ENCODE measurements at regions of chr5 and their contacts with region 1.

Region 1: DNA sequence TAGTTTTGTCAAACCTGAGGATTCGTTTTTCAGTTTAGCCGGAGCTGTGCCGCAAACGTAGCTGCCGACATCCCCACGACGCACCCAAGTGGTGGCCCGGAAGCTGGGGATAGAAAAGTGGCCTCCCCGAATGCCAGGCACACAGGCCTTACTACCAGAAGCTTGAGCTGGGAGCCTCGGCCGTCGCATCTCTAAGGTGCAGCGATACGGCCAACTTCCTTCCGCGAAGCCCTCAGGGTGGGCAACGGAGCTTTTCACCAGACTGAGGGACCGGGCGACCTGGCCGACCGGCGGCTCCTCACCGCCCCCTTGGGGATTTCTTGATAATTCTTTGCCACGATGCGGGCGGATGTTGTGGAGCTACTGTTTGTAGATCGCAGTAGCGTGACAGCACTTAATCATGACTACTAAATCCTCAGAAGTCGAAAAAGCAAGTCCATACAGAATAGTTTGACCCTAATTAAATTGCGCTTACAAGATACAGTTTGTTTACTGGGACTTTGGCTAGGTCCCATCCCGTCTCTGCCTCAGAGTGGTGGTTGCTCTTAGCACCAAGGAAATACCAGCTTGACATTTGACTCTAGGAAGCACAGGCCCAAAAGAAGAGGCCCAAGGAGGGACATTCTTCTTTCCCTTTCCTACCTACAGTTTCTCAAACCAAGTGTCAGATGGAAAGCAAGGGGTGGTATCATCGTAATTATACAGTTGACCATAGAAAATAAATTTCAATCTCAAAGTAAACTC is 613 bp upstream of the TMEM267 start:
- DNase-seq: peak; percentile 82 to 93 (median 86)
- H3K4me3 ChIP-seq: peak overlapping the region in 3 of 4 donors; percentile 5 to 90 (median 70)
- H3K27ac ChIP-seq: peak overlapping the region; percentile 92 to 100 (median 96)
- H3K4me1 ChIP-seq: peaks cover 0 to 21% of the 10 kb centered on the region in 2 donors
- H3K27me3 ChIP-seq: no peaks in the 10 kb centered on the region
- CTCF ChIP-seq: peak; percentile 70 to 86 (median 74)
- POLR2A ChIP-seq: peak in 1 of 2 donors; percentile 4

Region 2: DNA sequence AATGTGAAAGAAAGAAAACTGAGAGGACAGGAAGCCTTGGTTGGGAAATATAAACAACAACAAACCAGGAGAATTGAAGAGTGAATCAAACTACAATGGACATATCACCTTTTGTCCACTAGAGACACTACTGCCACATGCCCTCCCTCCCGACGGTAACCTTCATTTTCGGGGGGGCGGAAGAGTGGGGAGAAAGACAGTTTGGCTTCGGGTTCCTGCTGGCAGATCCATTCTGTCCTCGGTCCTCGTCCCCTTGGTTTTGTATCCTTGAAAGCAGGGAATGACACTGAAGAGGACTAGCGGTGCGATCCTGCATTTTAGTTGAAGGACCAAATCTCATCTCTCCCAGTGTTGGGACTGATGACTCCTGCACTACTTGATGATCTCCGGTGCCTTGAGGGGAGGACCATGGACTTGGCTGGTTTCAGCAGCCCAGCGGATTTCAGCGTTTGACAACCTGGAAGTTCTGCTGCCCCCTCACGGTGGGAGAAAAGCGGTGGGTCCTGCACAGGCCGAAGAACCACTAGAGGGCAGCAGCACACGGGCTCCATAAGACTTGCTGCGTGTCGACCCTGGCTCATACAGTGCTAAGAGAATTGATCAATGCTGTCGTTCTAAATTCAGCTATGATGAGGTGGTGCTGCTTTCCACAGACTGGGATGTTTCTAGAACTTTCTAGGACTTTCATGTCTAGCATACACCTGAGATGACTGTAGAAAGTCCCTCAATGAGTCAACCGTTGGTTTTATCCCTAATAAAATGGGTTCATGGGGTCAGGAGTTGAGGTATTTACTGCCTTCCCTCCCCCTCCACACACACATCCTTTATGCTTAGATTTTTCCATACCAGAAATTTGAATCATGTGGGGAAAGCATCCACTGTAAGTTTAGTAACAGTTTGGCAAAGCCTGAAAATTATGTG is 378.6 kb before region 1 on chr5:
- intact Hi-C with region 1: loop called in 1 of 2 experiments (anchors 5 kb)
- DNase-seq: peak; percentile 88 to 96 (median 94)
- H3K4me3 ChIP-seq: peak overlapping the region in 3 of 4 donors; percentile 10 to 44 (median 16)
- H3K27ac ChIP-seq: peak overlapping the region in 4 of 5 donors; percentile 36 to 82 (median 63)
- H3K4me1 ChIP-seq: peaks cover 0 to 7% of the 10 kb centered on the region in 2 donors
- H3K27me3 ChIP-seq: no peaks in the 10 kb centered on the region
- CTCF ChIP-seq: peak; percentile 99 to 100 (median 100)
- POLR2A ChIP-seq: no peak

Region 3: DNA sequence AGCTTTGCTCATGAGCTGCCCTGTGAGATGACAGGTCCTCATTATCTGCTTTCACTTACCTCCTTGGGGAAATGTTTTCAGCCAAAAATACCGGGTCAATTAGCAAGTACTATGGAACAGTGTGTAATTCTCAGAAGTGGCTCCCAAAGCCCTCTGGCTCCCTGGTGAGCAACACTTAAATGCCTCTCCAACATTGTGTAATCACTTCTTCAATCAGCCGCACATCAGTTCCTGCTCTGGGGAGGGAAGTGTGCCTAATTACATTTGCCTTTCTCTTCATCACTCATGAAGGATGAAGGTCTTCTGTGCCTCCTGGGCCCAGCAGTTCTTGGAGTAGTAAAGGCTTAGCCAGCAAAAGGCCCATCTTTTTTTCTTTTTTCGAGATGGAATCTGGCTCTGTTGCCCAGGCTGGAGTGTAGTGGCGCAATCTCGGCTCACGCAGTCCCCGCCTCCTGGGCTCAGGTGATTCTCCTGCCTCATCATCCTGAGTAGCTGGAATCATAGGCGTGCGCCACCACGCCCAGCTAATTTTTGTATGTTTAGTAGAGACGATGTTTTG is 269.1 kb before region 1 on chr5:
- intact Hi-C with region 1: no loop called
- DNase-seq: no peak
- H3K4me3 ChIP-seq: no peak overlapping the region
- H3K27ac ChIP-seq: no peak overlapping the region
- H3K4me1 ChIP-seq: no peaks in the 10 kb centered on the region
- H3K27me3 ChIP-seq: no peaks in the 10 kb centered on the region
- CTCF ChIP-seq: no peak
- POLR2A ChIP-seq: no peak

Region 4: DNA sequence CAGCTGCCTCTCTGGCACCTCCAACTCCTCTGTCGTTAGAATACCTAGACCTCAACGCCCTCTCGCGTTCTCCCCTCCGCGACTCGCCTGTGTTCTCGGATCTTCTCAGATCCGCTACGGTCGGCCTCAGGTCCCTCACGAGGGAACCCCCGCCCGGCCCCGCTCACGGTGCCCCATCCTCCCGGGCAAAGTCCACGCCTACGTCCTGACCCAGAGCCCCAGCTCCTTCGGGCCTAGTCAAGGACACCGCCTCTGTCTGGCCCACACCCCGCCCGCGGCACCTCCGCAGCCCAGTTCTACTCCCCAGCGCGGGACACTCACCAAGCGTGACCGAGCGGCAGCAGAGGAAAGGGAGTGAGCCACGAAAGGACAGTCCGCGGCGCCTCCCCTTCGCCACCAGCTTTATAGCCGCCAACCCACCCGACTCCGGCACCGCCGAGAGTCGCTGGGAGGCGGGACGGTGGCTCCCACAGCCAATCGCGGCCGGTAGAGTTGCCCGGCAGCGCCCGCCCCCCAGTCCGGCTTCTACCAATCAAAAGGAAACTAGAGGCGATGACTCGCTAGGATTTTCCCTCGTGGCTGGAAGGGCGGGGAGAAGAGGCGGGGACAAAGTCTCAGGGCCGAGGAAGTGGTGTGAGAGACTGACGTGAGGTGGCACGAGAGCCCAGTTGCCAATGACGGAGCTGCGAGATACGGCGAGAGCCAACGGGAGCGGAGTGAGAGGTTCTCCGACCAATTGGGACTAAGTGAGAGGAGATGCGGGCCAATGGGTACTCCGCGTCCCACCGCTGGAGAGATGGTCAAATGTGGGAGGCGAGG is 171.0 kb before region 1 on chr5 and contains the start of gene HMGCS1:
- intact Hi-C with region 1: loop called in 1 of 2 experiments (anchors 10 kb)
- DNase-seq: peak; percentile 99 to 100 (median 99)
- H3K4me3 ChIP-seq: peak within 1 kb of the TSS; percentile 69 to 99 (median 82)
- H3K27ac ChIP-seq: peak within 1 kb of the TSS; percentile 86 to 96 (median 92)
- H3K4me1 ChIP-seq: peaks cover 7 to 46% of the 10 kb centered on the region in 2 donors
- H3K27me3 ChIP-seq: no peaks in the 10 kb centered on the region
- CTCF ChIP-seq: no peak
- POLR2A ChIP-seq: peak; percentile 98
- total RNA-seq, gene HMGCS1: 16.2 to 1,105 (median 40.8) TPM

Measured in adrenal gland (tissue), 19 donors.